ACHN (cell line): ENCODE measurements at regions of chr3 and their contacts with region 1.

Region 1: GRCh38 chr3:139319428-139320402 is 24.1 kb upstream of the MRPS22 start:
- DNase-seq: peak; percentile 53

Region 2: GRCh38 chr3:139111392-139112229 is 208.1 kb before region 1 on chr3:
- in situ Hi-C with region 1: loop called (anchors 25 kb)
- DNase-seq: peak; percentile 69

Region 3: GRCh38 chr3:139519998-139520737 is 200.5 kb after region 1 on chr3:
- in situ Hi-C with region 1: no loop called
- DNase-seq: peak; percentile 14